A673 (cell line): ENCODE measurements at regions of chr12 and their contacts with region 1.

Region 1: GRCh38 chr12:30847259-30847658 is 79.3 kb upstream of the TSPAN11 start:
- DNase-seq: peak; percentile 85
- H3K4me3 ChIP-seq: no peak overlapping the region
- H3K27ac ChIP-seq: no peak overlapping the region
- H3K4me1 ChIP-seq: no peaks in the 10 kb centered on the region
- H3K27me3 ChIP-seq: no peaks in the 10 kb centered on the region
- CTCF ChIP-seq: peak; percentile 86

Region 2: GRCh38 chr12:29309320-29309902 is 1537.8 kb before region 1 on chr12:
- CTCF ChIA-PET with region 1: no interaction called
- POLR2A ChIA-PET with region 1: no interaction called
- intact Hi-C with region 1: loop called (anchors 10 kb)
- DNase-seq: peak; percentile 18
- H3K4me3 ChIP-seq: no peak overlapping the region
- H3K27ac ChIP-seq: no peak overlapping the region
- H3K4me1 ChIP-seq: peaks cover 5% of the 10 kb centered on the region
- H3K27me3 ChIP-seq: no peaks in the 10 kb centered on the region
- CTCF ChIP-seq: peak; percentile 61

Region 3: DNA sequence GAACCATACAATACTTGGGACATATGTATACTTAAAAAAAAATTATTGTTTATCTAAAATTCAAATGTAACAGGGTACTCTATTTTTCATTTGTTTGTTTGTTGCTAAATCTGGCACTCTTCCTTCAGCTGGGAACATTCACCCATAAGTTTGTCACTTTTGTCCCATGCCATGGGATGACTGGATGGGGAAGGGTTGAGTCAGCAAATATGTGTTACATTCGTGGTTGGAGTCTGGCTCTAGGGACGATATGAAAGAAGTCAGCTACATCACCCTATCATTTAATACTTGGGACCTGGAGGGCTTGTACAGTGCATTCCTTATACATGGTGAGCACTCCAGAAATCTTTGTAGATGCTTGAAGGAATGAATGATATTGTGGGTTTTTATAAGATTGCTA is 282.9 kb before region 1 on chr12:
- CTCF ChIA-PET with region 1: no interaction called
- POLR2A ChIA-PET with region 1: no interaction called
- intact Hi-C with region 1: no loop called
- DNase-seq: no peak
- H3K4me3 ChIP-seq: no peak overlapping the region
- H3K27ac ChIP-seq: no peak overlapping the region
- H3K4me1 ChIP-seq: no peaks in the 10 kb centered on the region
- H3K27me3 ChIP-seq: no peaks in the 10 kb centered on the region
- CTCF ChIP-seq: no peak

Region 4: GRCh38 chr12:30763053-30763452 is 84.2 kb before region 1 on chr12:
- CTCF ChIA-PET with region 1: no interaction called
- POLR2A ChIA-PET with region 1: no interaction called
- intact Hi-C with region 1: no loop called
- DNase-seq: no peak
- H3K4me3 ChIP-seq: no peak overlapping the region
- H3K27ac ChIP-seq: no peak overlapping the region
- H3K4me1 ChIP-seq: no peaks in the 10 kb centered on the region
- H3K27me3 ChIP-seq: no peaks in the 10 kb centered on the region
- CTCF ChIP-seq: no peak

Region 5: GRCh38 chr12:30961030-30961429 is 113.8 kb after region 1 on chr12:
- CTCF ChIA-PET with region 1: interaction called, 15 read pairs
- POLR2A ChIA-PET with region 1: no interaction called
- intact Hi-C with region 1: no loop called
- DNase-seq: no peak
- H3K4me3 ChIP-seq: no peak overlapping the region
- H3K27ac ChIP-seq: no peak overlapping the region
- H3K4me1 ChIP-seq: no peaks in the 10 kb centered on the region
- H3K27me3 ChIP-seq: no peaks in the 10 kb centered on the region
- CTCF ChIP-seq: no peak

Region 6: GRCh38 chr12:31238764-31239387 is 391.6 kb after region 1 on chr12:
- CTCF ChIA-PET with region 1: interaction called, 8 read pairs
- POLR2A ChIA-PET with region 1: no interaction called
- intact Hi-C with region 1: loop called (anchors 1 kb)
- DNase-seq: peak; percentile 75
- H3K4me3 ChIP-seq: no peak overlapping the region
- H3K27ac ChIP-seq: no peak overlapping the region
- H3K4me1 ChIP-seq: no peaks in the 10 kb centered on the region
- H3K27me3 ChIP-seq: no peaks in the 10 kb centered on the region
- CTCF ChIP-seq: peak; percentile 80

Region 7: GRCh38 chr12:31629756-31630732 is 782.8 kb after region 1 on chr12:
- CTCF ChIA-PET with region 1: interaction called, 3 read pairs
- POLR2A ChIA-PET with region 1: no interaction called
- intact Hi-C with region 1: loop called (anchors 10 kb)
- DNase-seq: no peak
- H3K4me3 ChIP-seq: no peak overlapping the region
- H3K27ac ChIP-seq: no peak overlapping the region
- H3K4me1 ChIP-seq: no peaks in the 10 kb centered on the region
- H3K27me3 ChIP-seq: no peaks in the 10 kb centered on the region
- CTCF ChIP-seq: no peak